Left ventricle myocardium superior (tissue), 1 donor: ENCODE measurements at regions of chr7 and their contacts with region 1.

Region 1: DNA sequence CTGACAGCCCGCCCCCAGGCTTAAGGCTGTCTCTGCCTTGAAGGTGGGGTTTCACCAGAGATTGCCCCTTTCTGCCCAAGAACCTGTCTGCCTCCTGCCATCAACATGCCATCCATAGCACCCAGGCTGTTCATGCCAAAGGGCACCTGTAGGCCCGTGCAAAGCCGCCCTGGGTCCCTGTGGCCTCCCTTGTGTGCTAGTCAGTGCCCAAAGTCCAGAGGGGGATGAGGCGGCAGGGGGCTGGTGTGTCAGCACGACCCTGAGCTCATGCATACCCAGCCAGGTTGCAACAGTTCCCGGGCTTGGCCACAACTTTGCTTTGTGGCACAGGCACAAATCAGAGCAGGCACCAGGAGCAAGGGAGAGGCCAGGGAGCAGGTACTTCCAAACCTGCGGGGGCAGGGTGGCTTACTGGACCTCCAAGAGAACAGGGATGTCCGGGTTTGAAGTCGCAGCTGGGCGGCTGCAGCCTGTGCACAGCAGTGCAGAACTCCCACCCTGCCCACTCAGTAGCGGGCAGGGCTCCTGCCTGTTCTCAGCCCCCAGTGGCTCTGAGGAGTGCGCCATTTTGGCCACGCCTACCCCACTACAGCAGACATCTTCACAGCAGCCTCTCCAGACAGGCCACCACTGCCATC is 671.1 kb upstream of the GRM3 start:
- DNase-seq: no peak
- ATAC-seq: no peak

Region 2: DNA sequence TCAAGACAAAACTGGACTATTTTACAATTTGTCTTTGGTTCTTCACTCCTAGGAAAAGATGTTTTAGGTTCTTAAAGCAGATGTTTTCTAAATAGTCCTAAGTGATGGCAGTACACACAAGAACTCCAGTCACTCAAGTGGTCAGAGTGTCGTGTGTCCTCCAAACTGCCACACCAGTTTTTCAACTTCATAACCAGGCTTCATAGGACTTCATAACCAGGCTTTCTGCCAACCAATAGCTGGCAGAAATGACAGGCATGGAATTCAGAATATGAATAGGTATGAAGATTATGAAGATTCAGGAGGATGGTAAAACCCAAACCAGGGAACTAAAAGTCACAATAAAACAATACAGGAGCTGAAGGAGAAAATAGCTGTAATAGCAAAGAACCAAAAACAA is 64.6 kb before region 1 on chr7:
- intact Hi-C with region 1: loop called (anchors 10 kb)
- DNase-seq: no peak
- ATAC-seq: no peak

Region 3: GRCh38 chr7:87140271-87140748 is 1167.7 kb after region 1 on chr7:
- intact Hi-C with region 1: no loop called
- DNase-seq: no peak
- ATAC-seq: no peak